ENCODE measurements at regions of chr12 and their contacts with region 1.

Region 1: DNA sequence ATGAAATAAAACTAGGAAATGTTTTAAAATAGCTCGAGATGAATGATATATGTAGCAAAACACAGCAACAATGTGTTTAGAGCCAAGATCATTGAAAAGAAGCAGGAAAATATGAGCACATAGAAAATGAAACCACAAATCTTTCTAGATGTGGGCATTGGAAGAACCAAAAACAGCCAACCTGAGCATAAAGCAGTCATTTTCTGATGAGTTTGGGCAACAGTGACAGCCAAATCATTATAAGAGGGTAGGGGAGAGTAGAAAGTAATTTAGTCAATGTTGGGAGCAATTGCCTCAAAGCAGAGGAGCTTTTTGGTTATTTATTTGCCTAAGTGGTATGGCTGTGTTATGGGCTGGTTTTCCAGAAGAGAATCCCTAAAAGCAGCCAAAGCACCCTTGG is 8.8 kb upstream of the BICDL1 start:
- DNase-seq: peak; percentile 9
- H3K4me3 Mint-ChIP-seq: peak overlapping the region; percentile 53
- H3K27ac Mint-ChIP-seq: peak overlapping the region; percentile 90
- H3K4me1 Mint-ChIP-seq: peaks cover 11% of the 10 kb centered on the region
- H3K27me3 Mint-ChIP-seq: peaks cover 13% of the 10 kb centered on the region

Region 2: GRCh38 chr12:118970856-118971255 is 1009.4 kb before region 1 on chr12:
- intact Hi-C with region 1: no loop called
- DNase-seq: no peak
- H3K4me3 Mint-ChIP-seq: no peak overlapping the region
- H3K27ac Mint-ChIP-seq: no peak overlapping the region
- H3K4me1 Mint-ChIP-seq: no peaks in the 10 kb centered on the region
- H3K27me3 Mint-ChIP-seq: no peaks in the 10 kb centered on the region

Region 3: DNA sequence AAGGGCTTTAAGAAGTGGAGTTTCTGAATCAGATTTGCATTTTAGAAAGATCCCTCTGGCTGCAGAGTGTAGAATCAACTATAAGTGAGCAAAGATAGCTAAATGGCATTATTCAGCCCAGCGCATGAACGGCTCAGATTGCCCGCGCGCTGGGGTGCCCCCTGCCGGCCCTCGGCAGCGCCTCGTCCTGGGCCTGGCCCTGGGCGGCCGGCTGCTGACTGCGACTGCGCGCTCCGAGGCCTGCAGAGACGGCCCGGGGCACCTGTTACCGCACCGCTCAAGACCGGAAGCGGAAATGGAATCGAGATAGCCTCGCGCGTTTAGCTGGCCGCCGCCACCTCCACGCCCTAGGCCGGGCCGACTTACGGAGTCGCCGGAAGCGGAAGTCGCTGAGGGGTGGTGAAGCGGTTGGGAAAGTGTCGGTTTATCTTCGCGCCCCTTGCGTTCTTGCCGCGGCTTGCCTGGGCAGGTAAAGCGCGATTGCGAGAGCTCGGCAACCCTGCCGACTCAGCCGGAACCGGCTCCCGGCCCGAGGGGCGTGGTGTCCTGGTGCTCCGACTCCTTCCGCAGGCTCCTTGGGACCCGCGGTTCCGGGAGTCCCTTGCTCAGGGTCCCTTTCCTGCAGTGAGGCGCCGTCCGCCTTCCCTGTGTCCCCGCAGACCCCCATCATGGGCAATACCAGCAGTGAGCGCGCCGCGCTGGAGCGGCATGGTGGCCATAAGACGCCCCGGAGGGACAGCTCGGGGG is 312.5 kb before region 1 on chr12 and contains the start of gene PRKAB1:
- intact Hi-C with region 1: loop called (anchors 5 kb)
- DNase-seq: peak; percentile 96
- H3K4me3 Mint-ChIP-seq: peak within 1 kb of the TSS; percentile 95
- H3K27ac Mint-ChIP-seq: peak within 1 kb of the TSS; percentile 82
- H3K4me1 Mint-ChIP-seq: peaks cover 49% of the 10 kb centered on the region
- H3K27me3 Mint-ChIP-seq: no peaks in the 10 kb centered on the region
- total RNA-seq, gene PRKAB1: 30.3 and 33.7 TPM in 2 replicates

Region 4: DNA sequence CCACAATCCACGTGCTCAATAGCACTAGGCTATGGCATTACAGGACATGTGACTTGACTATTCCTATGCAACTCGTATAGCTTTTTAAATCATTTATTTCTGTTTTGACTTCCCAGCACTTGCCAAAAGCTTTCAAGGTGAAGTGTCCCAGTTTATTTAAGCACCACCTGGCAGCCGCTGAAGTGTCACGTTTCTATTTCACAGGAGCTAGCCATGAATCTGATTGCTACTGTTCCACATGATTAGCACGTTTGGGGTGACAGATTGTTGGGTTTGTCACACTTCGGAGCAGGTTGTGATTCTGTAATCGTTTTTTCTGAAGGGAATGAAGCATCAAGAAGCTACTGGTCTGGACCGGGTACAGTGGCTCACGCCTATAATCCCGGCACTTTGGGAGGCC is 31.1 kb before region 1 on chr12:
- intact Hi-C with region 1: no loop called
- DNase-seq: no peak
- H3K4me3 Mint-ChIP-seq: no peak overlapping the region
- H3K27ac Mint-ChIP-seq: no peak overlapping the region
- H3K4me1 Mint-ChIP-seq: no peaks in the 10 kb centered on the region
- H3K27me3 Mint-ChIP-seq: peaks cover 2% of the 10 kb centered on the region

Region 5: GRCh38 chr12:120006209-120006975 is 26.1 kb after region 1 on chr12:
- intact Hi-C with region 1: loop called (anchors 1 kb)
- DNase-seq: peak; percentile 42
- H3K4me3 Mint-ChIP-seq: peak overlapping the region; percentile 66
- H3K27ac Mint-ChIP-seq: peak overlapping the region; percentile 99
- H3K4me1 Mint-ChIP-seq: peaks cover 69% of the 10 kb centered on the region
- H3K27me3 Mint-ChIP-seq: no peaks in the 10 kb centered on the region